ENCODE measurements at regions of chr1 and their contacts with region 1.

Region 1: GRCh38 chr1:1906185-1907097 is 8.6 kb upstream of the CALML6 start:
- DNase-seq: peak; percentile 94

Region 2: DNA sequence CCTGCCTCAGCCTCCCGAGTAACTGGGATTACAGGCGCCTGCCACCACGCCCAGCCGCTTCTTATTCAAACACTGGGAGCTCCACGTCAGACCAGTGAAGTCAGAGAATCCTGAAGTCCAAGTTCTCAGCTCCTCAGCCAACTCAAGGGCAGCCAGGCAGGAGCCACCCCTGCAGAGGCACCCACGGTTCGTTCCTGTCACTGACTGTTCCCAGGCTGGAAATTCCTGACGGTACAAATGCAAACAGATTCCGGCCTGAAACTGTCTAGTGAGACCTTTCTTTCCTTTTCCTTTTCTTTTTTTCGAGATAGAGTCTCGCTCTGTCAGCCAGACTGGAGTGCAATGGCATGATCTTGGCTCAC is 225.5 kb before region 1 on chr1:
- intact Hi-C with region 1: no loop called
- DNase-seq: no peak

Region 3: GRCh38 chr1:1777950-1778662 is 128.3 kb before region 1 on chr1 and contains the start of gene NADK:
- intact Hi-C with region 1: loop called (anchors 2 kb)
- DNase-seq: no peak
- total RNA-seq, gene NADK: 31.3 TPM

Region 4: GRCh38 chr1:1799716-1800115 is 106.7 kb before region 1 on chr1:
- intact Hi-C with region 1: no loop called
- DNase-seq: no peak

Region 5: DNA sequence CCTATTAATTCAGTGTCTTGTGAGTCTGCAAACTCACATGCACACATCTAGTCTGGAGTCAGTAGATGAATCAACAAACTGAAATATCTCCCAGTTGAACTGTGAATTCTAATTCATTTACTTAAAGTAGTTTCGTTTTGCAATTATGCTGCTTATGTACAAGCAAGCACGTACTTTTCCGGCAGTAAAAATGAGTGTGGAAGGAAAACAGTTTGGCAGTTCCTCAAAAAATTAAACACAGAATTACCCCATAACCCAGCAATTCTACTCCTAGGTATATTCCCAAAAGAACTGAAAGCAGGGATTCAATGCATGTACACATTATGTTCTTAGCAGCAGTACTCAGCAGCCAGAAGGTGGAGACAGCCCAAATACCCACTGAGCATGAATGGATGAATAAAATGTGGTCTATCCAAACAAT is 64.9 kb before region 1 on chr1:
- intact Hi-C with region 1: loop called (anchors 5 kb)
- DNase-seq: no peak

Region 6: DNA sequence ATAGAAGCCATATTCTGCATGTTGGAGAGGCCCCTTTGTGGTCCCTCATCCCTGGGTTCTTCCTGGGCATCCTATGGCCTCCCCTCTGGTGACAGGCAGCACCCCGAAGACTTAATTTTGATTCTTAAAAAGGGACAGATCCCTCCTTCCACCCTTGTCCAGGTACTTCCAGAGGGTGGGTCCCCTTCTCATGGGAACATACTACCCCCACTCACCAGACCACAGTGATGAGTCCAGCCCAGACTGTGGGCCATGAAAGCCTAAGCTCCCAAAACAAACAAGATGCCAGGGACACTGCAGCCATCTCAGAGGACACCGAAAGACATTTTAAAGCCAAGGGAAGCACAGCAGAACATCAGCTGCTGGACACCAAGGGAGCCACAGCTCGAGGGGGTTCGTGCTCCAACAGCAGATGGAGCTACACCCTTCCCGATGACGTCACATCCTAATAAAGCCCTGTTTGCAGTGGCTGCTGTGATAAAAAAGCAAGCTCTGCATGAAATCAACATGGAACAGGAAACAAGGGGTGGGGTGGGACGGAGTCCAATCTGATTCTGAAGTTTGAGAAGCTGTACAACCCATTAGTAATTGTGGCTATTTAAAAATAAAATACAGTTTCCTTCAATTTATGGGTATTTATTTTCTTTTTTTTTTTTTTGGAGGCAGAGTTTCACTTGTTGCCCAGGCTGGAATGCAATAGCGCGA is 47.9 kb before region 1 on chr1:
- intact Hi-C with region 1: loop called (anchors 1 kb)
- DNase-seq: peak; percentile 84

Region 7: GRCh38 chr1:1985375-1986050 is 79.1 kb after region 1 on chr1:
- intact Hi-C with region 1: no loop called
- DNase-seq: no peak

Region 8: GRCh38 chr1:1996207-1996651 is 89.8 kb after region 1 on chr1:
- intact Hi-C with region 1: no loop called
- DNase-seq: no peak